ENCODE measurements at regions of chr10 and their contacts with region 1.

Region 1: DNA sequence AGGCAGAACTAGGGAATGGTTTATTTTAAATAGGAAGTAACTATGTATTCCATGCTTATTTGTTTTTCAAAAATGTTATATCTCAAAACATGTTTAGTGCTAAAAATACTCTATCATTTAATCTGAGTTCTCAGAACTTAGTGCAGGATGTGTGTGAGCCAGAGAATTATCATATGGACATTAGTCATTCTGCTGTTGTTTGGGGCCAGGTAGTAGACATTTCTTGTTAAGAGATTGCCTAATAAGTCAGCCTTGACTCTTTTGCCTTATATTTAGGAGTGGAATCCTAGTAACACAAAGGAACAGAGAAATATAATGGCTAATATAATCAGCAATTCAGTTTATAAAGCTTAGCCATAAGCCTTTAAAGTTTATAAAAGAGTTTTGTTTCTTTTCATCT is 149.8 kb downstream of the CCSER2 start:
- DNase-seq: no peak
- H3K4me3 ChIP-seq: no peak overlapping the region
- H3K4me3 Mint-ChIP-seq: no peak overlapping the region
- H3K27ac ChIP-seq: no peak overlapping the region
- H3K27ac Mint-ChIP-seq: no peak overlapping the region
- H3K4me1 ChIP-seq: no peaks in the 10 kb centered on the region
- H3K4me1 Mint-ChIP-seq: no peaks in the 10 kb centered on the region
- H3K27me3 ChIP-seq: no peaks in the 10 kb centered on the region
- H3K27me3 Mint-ChIP-seq: peaks cover 0 to 1% (median 0%) of the 10 kb centered on the region in 3 donors
- CTCF ChIP-seq: no peak

Region 2: DNA sequence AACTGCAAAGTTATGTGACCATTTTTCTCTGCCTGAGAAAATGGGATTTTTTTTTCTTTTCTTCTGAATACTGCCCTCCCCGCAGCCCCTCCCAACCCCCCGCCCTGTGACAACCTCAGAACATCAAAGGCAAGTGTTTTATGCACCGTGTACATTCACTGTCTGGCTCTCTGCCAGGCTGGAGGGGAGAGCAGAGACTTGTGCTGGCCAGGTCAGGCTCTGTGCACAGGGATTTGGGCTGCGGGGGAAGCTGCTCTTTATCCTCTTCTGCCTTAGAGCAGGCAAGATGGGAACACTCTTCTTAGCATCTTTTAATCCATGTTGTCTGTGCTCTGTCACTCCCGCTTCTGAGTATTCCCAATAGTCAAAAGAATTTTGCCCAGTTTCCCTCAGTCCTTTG is 45.4 kb after region 1 on chr10:
- intact Hi-C with region 1: loop called in 1 of 2 experiments (anchors 10 kb)
- DNase-seq: no peak
- H3K4me3 ChIP-seq: no peak overlapping the region
- H3K4me3 Mint-ChIP-seq: no peak overlapping the region
- H3K27ac ChIP-seq: no peak overlapping the region
- H3K27ac Mint-ChIP-seq: no peak overlapping the region
- H3K4me1 ChIP-seq: no peaks in the 10 kb centered on the region
- H3K4me1 Mint-ChIP-seq: no peaks in the 10 kb centered on the region
- H3K27me3 ChIP-seq: no peaks in the 10 kb centered on the region
- H3K27me3 Mint-ChIP-seq: peaks cover 0 to 4% (median 2%) of the 10 kb centered on the region in 3 donors
- CTCF ChIP-seq: no peak

Region 3: GRCh38 chr10:85147346-85148250 is 669.4 kb after region 1 on chr10:
- intact Hi-C with region 1: no loop called
- DNase-seq: no peak
- H3K4me3 ChIP-seq: no peak overlapping the region
- H3K4me3 Mint-ChIP-seq: no peak overlapping the region
- H3K27ac ChIP-seq: no peak overlapping the region
- H3K27ac Mint-ChIP-seq: no peak overlapping the region
- H3K4me1 ChIP-seq: no peaks in the 10 kb centered on the region
- H3K4me1 Mint-ChIP-seq: no peaks in the 10 kb centered on the region
- H3K27me3 ChIP-seq: no peaks in the 10 kb centered on the region
- H3K27me3 Mint-ChIP-seq: peaks cover 0 to 5% (median 0%) of the 10 kb centered on the region in 3 donors
- CTCF ChIP-seq: no peak